ENCODE measurements at regions of chrX and their contacts with region 1.

Region 1: GRCh38 chrX:105273136-105273730 is 52.7 kb upstream of the TEX13A start:
- DNase-seq: peak; percentile 54 to 83
- H3K4me3 ChIP-seq: no peak overlapping the region
- H3K27ac ChIP-seq: peak overlapping the region; percentile 60
- H3K4me1 ChIP-seq: peaks cover 23% of the 10 kb centered on the region
- H3K27me3 ChIP-seq: no peaks in the 10 kb centered on the region
- CTCF ChIP-seq: no peak

Region 2: GRCh38 chrX:105190252-105190853 is 82.9 kb before region 1 on chrX:
- CTCF ChIA-PET with region 1: interaction called, 4 read pairs
- POLR2A ChIA-PET with region 1: no interaction called
- intact Hi-C with region 1: loop called (anchors 5 kb)
- DNase-seq: peak in 1 of 2 experiments; percentile 39
- H3K4me3 ChIP-seq: no peak overlapping the region
- H3K27ac ChIP-seq: no peak overlapping the region
- H3K4me1 ChIP-seq: no peaks in the 10 kb centered on the region
- H3K27me3 ChIP-seq: no peaks in the 10 kb centered on the region
- CTCF ChIP-seq: peak; percentile 80

Region 3: GRCh38 chrX:105662248-105662647 is 389.0 kb after region 1 on chrX:
- CTCF ChIA-PET with region 1: no interaction called
- POLR2A ChIA-PET with region 1: no interaction called
- intact Hi-C with region 1: no loop called
- DNase-seq: no peak
- H3K4me3 ChIP-seq: no peak overlapping the region
- H3K27ac ChIP-seq: no peak overlapping the region
- H3K4me1 ChIP-seq: 0 out of 2 replicates have a peak, but pooled peaks cover 3% of the 10 kb centered on the region
- H3K27me3 ChIP-seq: no peaks in the 10 kb centered on the region
- CTCF ChIP-seq: no peak

Measured in PC-9 (cell line).